H1 (cell line): ENCODE measurements at regions of chr7 and their contacts with region 1.

Region 1: GRCh38 chr7:974820-975681 is at the start of gene COX19:
- DNase-seq: peak; percentile 54 to 94
- H3K4me3 ChIP-seq: peak within 1 kb of the TSS; percentile 67 to 89 (median 83)
- H3K27ac ChIP-seq: peak within 1 kb of the TSS; percentile 70; the same call in 1 of the 2 replicates
- H3K4me1 ChIP-seq: peaks cover 0 to 4% (median 2%) of the 10 kb centered on the region in 4 experiments; a peak in 5 of 7 replicates
- H3K27me3 ChIP-seq: no peaks in the 10 kb centered on the region
- CTCF ChIP-seq: no peak
- EP300 ChIP-seq: peak in 1 of 2 experiments; percentile 26; a peak in 1 of 3 replicates
- POLR2A ChIP-seq: peak in 1 of 2 experiments; percentile 89; a peak in 2 of 3 replicates
- RAD21 ChIP-seq: no peak
- total RNA-seq, gene COX19: 7.9 and 9.0 TPM in 2 replicates

Region 2: DNA sequence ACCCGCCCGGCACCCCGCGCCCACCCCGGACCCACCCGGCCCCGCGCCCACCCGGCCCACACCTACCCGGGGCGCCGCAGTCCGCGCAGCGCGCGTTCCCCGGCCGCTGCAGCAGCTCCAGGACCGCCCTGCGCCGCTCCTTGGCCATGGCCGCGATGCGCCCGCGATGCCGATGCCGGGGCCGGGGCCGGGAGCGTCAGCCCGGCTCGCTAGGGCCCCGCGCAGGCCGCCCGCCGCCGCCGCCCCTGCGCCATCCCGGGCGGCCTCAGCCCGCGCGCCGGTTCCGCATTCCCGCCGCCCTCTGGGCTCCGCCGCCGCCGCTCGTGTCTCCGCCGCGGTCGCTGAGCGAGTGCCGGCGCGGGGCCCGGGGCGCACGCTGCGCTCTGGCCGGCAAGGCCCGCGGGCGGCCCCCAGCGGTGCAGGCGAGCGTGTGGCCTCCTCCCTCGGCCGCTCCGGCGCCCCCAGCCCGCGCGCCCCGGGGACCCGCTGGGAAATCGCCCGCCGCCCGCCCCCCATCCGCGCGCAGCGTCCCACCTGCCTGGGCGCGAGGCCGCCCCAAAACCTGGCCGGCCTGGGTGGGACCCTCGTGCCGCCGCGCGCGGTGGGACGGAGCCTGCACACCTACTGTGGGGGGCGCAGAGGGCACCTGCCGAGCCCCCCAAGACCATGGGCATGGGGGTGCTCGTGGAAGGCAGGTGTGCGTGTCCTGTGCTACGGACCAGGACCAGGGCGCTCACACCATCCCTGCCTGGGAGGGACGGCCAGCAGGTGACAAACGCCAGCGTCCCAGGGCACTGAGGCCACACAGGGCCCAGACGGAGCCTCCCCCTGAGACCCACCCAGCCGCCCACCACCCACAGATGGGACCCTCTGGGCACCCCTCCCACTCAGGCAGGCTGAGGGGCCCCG is 20.5 kb before region 1 on chr7 and contains the start of gene ADAP1:
- CTCF ChIA-PET with region 1: interaction called, 12 read pairs
- POLR2A ChIA-PET with region 1: interaction called, 4 read pairs
- DNase-seq: no peak
- H3K4me3 ChIP-seq: peak within 1 kb of the TSS; percentile 27 to 62 (median 46)
- H3K27ac ChIP-seq: no peak within 1 kb of the TSS
- H3K4me1 ChIP-seq: peaks cover 0 to 12% (median 6%) of the 10 kb centered on the region in 4 experiments; a peak in 5 of 7 replicates
- H3K27me3 ChIP-seq: peaks cover 2 to 26% (median 19%) of the 10 kb centered on the region in 4 experiments; a peak in 6 of 7 replicates
- CTCF ChIP-seq: peak in 1 of 3 experiments; percentile 12; a peak in 1 of 4 replicates
- EP300 ChIP-seq: no peak
- POLR2A ChIP-seq: no peak
- RAD21 ChIP-seq: peak in 1 of 2 experiments; percentile 51; a peak in 2 of 4 replicates
- total RNA-seq, gene ADAP1: 5.4 and 5.8 TPM in 2 replicates

Region 3: GRCh38 chr7:964401-965231 is 10.4 kb before region 1 on chr7:
- CTCF ChIA-PET with region 1: interaction called, 7 read pairs
- POLR2A ChIA-PET with region 1: interaction called, 10 read pairs
- DNase-seq: no peak
- H3K4me3 ChIP-seq: no peak overlapping the region
- H3K27ac ChIP-seq: no peak overlapping the region
- H3K4me1 ChIP-seq: peaks cover 0 to 9% (median under 1%) of the 10 kb centered on the region in 4 experiments; a peak in 3 of 7 replicates
- H3K27me3 ChIP-seq: no peaks in the 10 kb centered on the region
- CTCF ChIP-seq: peak; percentile 42 to 63 (median 47)
- EP300 ChIP-seq: no peak
- POLR2A ChIP-seq: peak in 1 of 2 experiments; percentile 49; a peak in 1 of 3 replicates
- RAD21 ChIP-seq: peak; percentile 31 to 41; a peak in 3 of 4 replicates

Region 4: DNA sequence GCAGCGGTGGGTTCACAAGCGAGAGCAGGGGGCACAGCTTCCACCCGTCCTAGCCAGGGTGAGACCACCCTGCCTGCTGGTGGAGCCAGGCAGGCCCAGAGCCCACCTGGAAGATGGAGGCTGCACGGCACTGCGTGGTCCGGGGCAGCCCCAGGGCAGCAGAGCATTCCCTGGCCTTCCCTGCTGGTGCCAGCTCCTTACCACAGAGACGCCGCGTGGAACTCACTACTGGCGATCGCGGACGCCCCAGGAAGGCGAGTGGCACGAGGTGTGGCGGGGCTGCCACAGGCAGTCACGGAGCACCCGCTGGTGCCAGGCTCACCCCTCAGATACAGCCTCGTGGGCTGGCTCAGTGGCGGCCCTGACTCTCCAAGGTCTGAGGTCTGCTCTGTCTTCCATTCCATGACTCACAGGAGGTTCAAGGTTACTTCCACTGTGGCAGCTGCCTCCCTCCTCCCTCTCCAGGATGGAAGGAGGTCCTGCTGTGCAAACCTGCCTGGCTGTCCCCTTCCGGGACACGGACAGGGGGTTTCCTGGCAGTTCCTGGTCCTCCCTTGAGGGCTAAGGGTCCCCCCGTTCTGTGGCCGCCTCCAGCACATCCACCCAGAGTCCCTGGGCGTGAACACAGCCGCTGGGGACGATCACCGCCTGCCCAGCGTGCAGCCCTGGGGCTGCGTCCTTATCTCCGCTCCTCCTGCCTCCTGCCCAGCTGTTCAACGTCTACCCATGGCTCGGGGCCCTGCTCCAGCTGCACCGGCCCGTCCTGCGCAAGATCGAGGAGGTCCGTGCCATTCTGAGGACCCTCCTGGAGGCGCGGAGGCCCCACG is 11.1 kb after region 1 on chr7:
- CTCF ChIA-PET with region 1: interaction called, 32 read pairs
- POLR2A ChIA-PET with region 1: interaction called, 12 read pairs
- DNase-seq: no peak
- H3K4me3 ChIP-seq: no peak overlapping the region
- H3K27ac ChIP-seq: no peak overlapping the region
- H3K4me1 ChIP-seq: peaks cover 0 to 5% (median 1%) of the 10 kb centered on the region in 4 experiments; a peak in 3 of 7 replicates
- H3K27me3 ChIP-seq: no peaks in the 10 kb centered on the region
- CTCF ChIP-seq: no peak
- EP300 ChIP-seq: no peak
- POLR2A ChIP-seq: no peak
- RAD21 ChIP-seq: no peak

Region 5: GRCh38 chr7:1096156-1097119 is 121.4 kb after region 1 on chr7:
- CTCF ChIA-PET with region 1: no interaction called
- POLR2A ChIA-PET with region 1: no interaction called
- DNase-seq: no peak
- H3K4me3 ChIP-seq: no peak overlapping the region
- H3K27ac ChIP-seq: no peak overlapping the region; the same call in 1 of the 2 replicates
- H3K4me1 ChIP-seq: no peaks in the 10 kb centered on the region; a peak in 1 of 7 replicates
- H3K27me3 ChIP-seq: no peaks in the 10 kb centered on the region
- CTCF ChIP-seq: no peak
- EP300 ChIP-seq: no peak
- POLR2A ChIP-seq: no peak
- RAD21 ChIP-seq: no peak